Right cardiac atrium (tissue), 5 donors: ENCODE measurements at regions of chr4 and their contacts with region 1.

Region 1: DNA sequence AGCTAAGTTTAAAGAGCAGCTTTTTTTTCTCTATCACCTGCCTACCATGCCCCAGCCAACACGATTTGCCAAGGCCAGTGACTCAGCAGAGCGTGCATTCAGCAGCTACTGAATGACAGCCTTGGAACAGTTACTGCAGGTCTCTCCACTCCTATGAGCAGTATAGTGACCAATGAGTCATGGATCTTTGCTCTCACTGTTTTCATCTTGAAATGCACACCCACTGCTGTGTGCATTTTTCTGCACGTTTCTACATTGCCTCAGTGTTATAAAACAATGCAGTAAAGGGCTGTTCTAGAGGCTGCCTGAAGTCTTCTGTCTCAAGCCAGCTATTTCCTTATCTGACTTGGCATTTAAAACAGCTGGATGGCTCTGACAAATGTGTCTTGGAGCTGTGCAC is 66.0 kb upstream of the C4orf54 start:
- DNase-seq: peak; percentile 48 to 76 (median 73)
- ATAC-seq: peak; percentile 94
- H3K4me3 ChIP-seq: no peak overlapping the region
- H3K27ac ChIP-seq: peak overlapping the region; percentile 92
- H3K4me1 ChIP-seq: peaks cover 7% of the 10 kb centered on the region
- H3K27me3 ChIP-seq: no peaks in the 10 kb centered on the region

Region 2: DNA sequence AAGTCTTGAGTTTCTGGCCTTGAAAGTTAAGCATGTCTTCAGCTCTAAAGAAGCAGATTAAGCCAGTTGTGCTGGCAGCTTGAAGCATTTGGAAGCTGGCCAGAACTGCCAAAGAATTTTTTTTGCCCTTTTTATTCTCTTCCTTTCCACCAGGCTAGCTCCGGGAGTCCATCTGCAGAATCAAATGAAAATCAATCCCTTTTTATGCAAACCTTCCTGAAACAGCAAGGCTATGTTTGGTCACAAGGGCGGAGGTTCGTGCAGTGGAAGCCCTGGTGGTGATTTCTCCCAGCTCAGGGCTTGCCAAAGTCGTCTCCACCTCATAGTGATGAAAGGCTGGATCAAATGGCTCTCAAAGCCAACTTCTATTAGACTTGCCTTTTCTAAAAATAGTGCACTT is 44.4 kb before region 1 on chr4:
- intact Hi-C with region 1: loop called in 1 of 4 experiments (anchors 10 kb)
- DNase-seq: peak; percentile 46 to 80 (median 78)
- ATAC-seq: peak; percentile 92 to 97
- H3K4me3 ChIP-seq: no peak overlapping the region
- H3K27ac ChIP-seq: peak overlapping the region; percentile 72
- H3K4me1 ChIP-seq: no peaks in the 10 kb centered on the region
- H3K27me3 ChIP-seq: no peaks in the 10 kb centered on the region

Region 3: DNA sequence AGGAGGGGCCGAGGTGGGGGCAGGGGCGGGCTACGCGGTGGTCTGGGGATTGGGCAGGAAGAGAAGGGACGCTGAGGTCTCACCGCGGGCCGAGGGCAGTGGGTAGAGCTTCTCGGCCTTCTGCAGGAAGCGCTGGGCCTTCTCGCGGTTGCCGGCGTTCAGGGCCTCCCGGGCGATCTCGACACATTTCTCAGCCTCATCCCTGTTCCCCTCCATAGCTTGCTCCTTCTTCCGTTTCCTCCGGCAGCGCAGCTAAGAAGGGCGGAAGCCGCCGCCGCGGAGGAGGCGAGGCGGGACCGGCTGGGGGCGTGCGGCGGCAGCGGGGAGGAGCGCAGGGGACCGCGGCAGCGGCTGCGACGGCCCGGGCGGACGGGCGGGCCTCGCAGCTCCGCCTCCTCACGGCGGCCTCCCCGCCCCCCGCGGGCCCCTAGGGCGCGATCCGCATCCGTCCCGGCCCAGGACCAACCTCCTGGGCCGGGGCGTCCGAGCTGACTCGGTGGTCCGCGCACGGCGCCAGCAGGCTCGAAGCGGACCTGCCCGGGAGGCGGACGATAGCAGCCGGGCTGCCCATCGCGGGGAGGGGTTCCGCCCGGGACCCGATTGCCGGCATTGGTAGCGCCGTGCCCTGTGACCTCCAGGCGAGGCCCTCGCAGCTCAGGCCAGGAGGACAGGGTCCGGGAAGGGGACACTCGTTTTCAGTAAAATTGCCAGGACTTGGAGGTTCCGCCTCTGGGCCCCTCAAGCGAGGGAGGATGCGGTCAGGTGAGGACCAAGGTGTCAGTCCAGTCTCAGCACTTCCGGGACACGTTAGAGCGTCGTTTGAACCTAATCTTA is 223.0 kb after region 1 on chr4 and contains the start of gene DNAJB14:
- intact Hi-C with region 1: no loop called
- DNase-seq: peak; percentile 85 to 93 (median 93)
- ATAC-seq: peak; percentile 81 to 83
- H3K4me3 ChIP-seq: peak within 1 kb of the TSS; percentile 93
- H3K27ac ChIP-seq: peak within 1 kb of the TSS; percentile 95
- H3K4me1 ChIP-seq: peaks cover 1% of the 10 kb centered on the region
- H3K27me3 ChIP-seq: no peaks in the 10 kb centered on the region
- total RNA-seq, gene DNAJB14: 25.3 to 29.0 (median 27.4) TPM